Esophagus squamous epithelium (tissue), 5 donors: ENCODE measurements at regions of chrX and their contacts with region 1.

Region 1: DNA sequence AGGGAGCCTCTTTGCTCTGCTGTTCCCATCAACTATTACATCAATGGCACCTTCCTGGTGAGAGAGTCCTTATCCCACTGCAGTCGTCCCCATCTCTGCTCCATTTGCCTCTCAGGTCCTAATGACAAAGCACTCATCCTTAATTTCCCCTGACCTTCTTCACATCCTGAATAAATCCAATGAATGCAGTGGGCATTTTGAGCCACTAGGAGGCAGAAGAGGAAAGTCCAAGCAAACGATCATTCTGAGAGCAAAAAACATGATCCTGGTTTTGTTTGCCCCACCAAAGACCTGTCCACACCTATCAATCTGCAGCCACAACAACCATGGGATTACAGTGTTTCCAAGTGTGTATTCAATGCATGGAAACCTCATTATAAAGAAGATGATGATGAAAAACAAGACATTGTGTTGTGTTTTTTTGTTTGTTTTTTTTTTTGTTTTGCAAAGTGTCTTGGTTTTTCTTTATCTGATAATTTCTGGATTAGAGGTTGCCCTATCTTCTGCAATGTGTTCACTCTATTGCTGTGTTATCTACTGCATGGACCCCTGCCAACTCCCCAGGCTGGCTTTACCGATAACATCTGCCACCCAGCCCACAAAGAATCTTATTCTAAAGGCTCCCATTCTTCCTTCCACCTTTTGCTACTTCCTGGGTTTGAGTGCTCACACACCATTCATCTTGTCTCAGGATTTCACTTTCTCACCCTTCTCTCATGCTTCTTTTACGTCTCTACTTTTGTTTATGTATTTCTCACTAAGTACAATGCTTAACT is 207.2 kb downstream of the NLGN4X start:
- DNase-seq: no peak
- H3K4me3 ChIP-seq: no peak overlapping the region
- H3K27ac ChIP-seq: no peak overlapping the region
- H3K4me1 ChIP-seq: no peaks in the 10 kb centered on the region
- H3K27me3 ChIP-seq: no peaks in the 10 kb centered on the region
- CTCF ChIP-seq: peak; percentile 32 to 63 (median 49)
- POLR2A ChIP-seq: no peak

Region 2: GRCh38 chrX:6095469-6095868 is 74.0 kb after region 1 on chrX:
- intact Hi-C with region 1: no loop called
- DNase-seq: no peak
- H3K4me3 ChIP-seq: no peak overlapping the region
- H3K27ac ChIP-seq: no peak overlapping the region
- H3K4me1 ChIP-seq: no peaks in the 10 kb centered on the region
- H3K27me3 ChIP-seq: no peaks in the 10 kb centered on the region
- CTCF ChIP-seq: no peak
- POLR2A ChIP-seq: no peak

Region 3: GRCh38 chrX:6468696-6469095 is 447.2 kb after region 1 on chrX:
- intact Hi-C with region 1: loop called (anchors 5 kb)
- DNase-seq: no peak
- H3K4me3 ChIP-seq: no peak overlapping the region
- H3K27ac ChIP-seq: no peak overlapping the region
- H3K4me1 ChIP-seq: no peaks in the 10 kb centered on the region
- H3K27me3 ChIP-seq: no peaks in the 10 kb centered on the region
- CTCF ChIP-seq: no peak
- POLR2A ChIP-seq: no peak